ENCODE measurements at regions of chr16 and their contacts with region 1.

Region 1: DNA sequence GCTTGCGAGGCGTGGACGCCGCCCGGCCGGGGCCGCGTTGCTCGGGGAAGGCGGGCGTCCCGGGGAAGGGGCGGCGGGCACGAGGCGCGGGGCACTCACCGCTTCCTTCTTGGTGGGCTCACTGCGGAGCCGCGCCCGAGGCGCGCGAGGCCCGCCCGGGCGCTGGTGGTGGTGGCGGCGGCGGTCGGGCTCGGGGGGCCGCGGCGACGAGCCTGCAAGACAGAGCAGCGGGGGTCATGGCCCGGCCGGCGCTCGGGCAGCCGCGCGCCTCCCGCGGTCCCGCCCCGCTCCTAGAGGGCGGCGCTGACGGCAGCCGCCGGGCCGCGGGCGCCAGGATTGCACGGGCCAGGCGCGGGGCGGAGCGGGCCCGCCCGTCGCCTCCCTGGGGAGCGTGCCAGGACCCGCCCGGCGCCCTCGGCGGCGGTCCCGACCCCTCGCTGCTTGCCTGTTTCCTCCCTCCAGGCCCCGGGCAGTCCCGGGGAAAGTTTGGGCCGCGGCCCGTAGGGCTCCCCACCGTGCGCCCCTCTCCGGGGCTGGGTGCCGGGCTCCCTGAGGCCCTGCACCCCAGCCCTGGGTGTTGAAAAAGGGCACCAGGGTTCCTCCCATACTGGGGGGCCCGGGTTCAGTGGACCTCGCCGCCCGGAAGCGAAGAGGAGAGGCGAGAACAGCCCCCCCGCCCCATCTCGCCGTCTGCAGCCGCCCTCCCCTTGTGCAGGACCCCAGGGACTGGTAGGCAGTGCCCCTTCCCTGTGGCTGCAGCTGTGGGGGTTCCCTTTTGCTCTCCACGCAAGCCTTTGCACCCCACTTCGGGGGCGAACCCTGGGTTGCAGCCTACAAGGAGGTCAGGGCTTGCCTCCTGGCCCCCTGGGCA is at the start of gene C16orf74:
- DNase-seq: no peak
- H3K4me3 ChIP-seq: peak within 1 kb of the TSS; percentile 32 to 68 (median 58)
- H3K27ac ChIP-seq: peak within 1 kb of the TSS in 1 of 4 donors; percentile 16
- H3K4me1 ChIP-seq: peaks cover 0 to 35% (median 32%) of the 10 kb centered on the region in 4 donors
- H3K27me3 ChIP-seq: peaks cover 0 to 7% (median 3%) of the 10 kb centered on the region in 3 donors
- CTCF ChIP-seq: no peak
- EP300 ChIP-seq: no peak
- POLR2A ChIP-seq: no peak
- total RNA-seq, gene C16orf74: 1.1 to 8.3 (median 1.4) TPM in 3 of 4 donors, not detected in the other

Region 2: DNA sequence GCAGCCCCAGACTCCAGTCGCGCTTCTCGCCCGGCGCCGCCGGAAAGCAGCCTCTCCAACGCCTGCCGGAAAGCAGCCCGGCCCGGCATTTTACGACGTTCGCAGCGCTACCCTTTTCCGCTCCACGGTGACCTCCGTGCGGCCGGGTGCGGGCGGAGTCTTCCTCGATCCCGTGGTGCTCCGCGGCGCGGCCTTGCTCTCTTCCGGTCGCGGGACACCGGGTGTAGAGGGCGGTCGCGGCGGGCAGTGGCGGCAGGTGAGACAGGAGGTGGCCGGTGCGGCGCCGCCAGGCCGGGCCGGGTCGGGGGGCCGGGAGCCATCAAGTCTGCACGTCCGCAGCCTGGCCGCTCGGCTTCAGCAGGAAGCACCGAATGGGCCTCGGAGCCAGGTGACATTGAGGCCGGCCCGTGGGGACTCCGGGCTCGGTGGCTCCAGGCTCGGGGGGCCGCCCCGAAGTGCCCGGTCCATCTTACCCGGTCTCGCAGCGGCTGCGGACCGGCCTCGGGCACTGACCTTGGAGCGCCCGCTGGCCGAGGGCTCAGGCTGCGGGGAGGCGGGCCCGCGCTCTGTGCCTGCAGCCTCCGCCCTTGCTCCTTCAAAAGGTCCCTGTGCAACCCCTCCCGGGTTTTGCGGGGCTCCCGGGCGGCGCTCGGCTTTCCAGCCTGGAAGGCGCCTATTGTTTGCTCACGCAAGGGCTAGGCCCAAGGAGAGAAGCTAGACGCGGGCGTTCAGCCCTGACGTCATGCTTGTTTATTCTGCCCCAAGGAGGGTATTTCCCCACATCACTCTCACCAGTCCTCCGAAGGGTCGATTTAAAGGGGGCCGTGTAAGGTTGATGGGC is 48.7 kb after region 1 on chr16 and contains the starts of genes COX4I1 and EMC8:
- intact Hi-C with region 1: loop called (anchors 5 kb)
- DNase-seq: peak; percentile 97
- H3K4me3 ChIP-seq: peak within 1 kb of the TSS; percentile 76 to 100 (median 97)
- H3K27ac ChIP-seq: peak within 1 kb of the TSS; percentile 88 to 99 (median 94)
- H3K4me1 ChIP-seq: peaks cover 0 to 39% (median 29%) of the 10 kb centered on the region in 4 donors
- H3K27me3 ChIP-seq: no peaks in the 10 kb centered on the region
- CTCF ChIP-seq: no peak
- EP300 ChIP-seq: peak in 1 of 4 donors; percentile 85
- POLR2A ChIP-seq: peak; percentile 77 to 82
- total RNA-seq, gene COX4I1: 700 to 868 (median 716) TPM
- total RNA-seq, gene EMC8: 23.2 to 38.8 (median 28.9) TPM